GM12878 (cell line): ENCODE measurements at regions of chr2 and their contacts with region 1.

Region 1: GRCh38 chr2:20015472-20016083 is 3.1 kb upstream of the MATN3 start:
- DNase-seq: peak; percentile 7
- ATAC-seq: peak; percentile 79
- H3K4me3 ChIP-seq: no peak overlapping the region
- H3K27ac ChIP-seq: no peak overlapping the region
- H3K4me1 ChIP-seq: no peaks in the 10 kb centered on the region
- H3K27me3 ChIP-seq: peaks cover 5 to 16% of the 10 kb centered on the region in 2 experiments
- CTCF ChIP-seq: peak; percentile 49 to 52 (median 51); a peak in 5 of 6 replicates
- EP300 ChIP-seq: no peak
- POLR2A ChIP-seq: no peak
- RAD21 ChIP-seq: peak; percentile 64

Region 2: GRCh38 chr2:19955544-19956422 is 59.8 kb before region 1 on chr2:
- CTCF ChIA-PET with region 1: interaction called, 22 read pairs
- POLR2A ChIA-PET with region 1: interaction called, 3 read pairs
- RAD21 ChIA-PET with region 1: interaction called, 22 read pairs
- SMC1A ChIA-PET with region 1: interaction called, 24 read pairs
- in situ Hi-C with region 1: no loop called
- intact Hi-C with region 1: loop called (anchors 1 kb)
- DNase-seq: peak; percentile 24
- ATAC-seq: peak; percentile 100
- H3K4me3 ChIP-seq: no peak overlapping the region
- H3K27ac ChIP-seq: no peak overlapping the region
- H3K4me1 ChIP-seq: no peaks in the 10 kb centered on the region
- H3K27me3 ChIP-seq: no peaks in the 10 kb centered on the region
- CTCF ChIP-seq: peak; percentile 79 to 98 (median 82)
- EP300 ChIP-seq: no peak
- POLR2A ChIP-seq: no peak
- RAD21 ChIP-seq: peak; percentile 91

Region 3: DNA sequence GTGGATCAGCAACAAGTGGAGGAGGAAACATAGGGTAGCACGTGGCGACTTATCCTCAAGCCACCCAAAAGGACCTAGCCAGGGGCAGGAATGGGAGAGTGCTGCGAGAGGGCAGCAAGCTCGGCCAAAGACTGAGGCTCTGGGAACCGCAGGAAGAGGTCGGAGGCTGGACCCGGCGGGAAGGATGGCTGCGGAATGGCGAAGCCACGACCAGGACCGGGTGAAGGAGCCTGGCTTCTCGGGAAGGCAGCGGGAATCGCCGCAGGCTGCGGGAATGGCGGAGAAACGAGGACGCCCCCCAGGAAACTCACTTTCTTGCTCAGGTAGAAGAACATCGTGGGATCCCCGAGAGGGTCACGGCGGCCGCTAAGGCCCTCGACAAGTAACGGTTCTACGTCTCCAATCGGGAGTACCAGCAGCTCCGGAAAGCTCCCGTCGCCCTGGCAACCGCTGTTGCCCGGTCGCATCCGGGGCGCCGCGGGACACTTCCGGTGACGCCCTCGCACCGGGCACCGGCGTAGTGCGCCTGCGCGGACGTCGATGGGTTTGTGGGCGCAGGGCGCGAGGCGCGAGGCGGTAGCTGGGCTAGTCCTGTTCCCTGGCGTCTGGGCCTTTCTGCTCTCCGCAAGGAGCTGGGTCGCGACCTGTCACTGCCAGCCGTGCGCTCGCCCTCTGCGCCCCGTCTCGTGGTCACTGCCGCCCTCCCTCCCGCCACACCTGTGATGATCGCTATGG is 25.7 kb before region 1 on chr2 and contains the start of gene WDR35:
- CTCF ChIA-PET with region 1: interaction called, 12 read pairs
- POLR2A ChIA-PET with region 1: interaction called, 7 read pairs
- RAD21 ChIA-PET with region 1: no interaction called
- SMC1A ChIA-PET with region 1: interaction called, 6 read pairs
- in situ Hi-C with region 1: no loop called
- intact Hi-C with region 1: no loop called
- DNase-seq: peak; percentile 53
- ATAC-seq: peak; percentile 94
- H3K4me3 ChIP-seq: peak within 1 kb of the TSS; percentile 95
- H3K27ac ChIP-seq: peak within 1 kb of the TSS; percentile 28; the same call in 1 of the 2 replicates
- H3K4me1 ChIP-seq: peaks cover 6% of the 10 kb centered on the region; the same call in 1 of the 2 replicates
- H3K27me3 ChIP-seq: no peaks in the 10 kb centered on the region
- CTCF ChIP-seq: no peak
- EP300 ChIP-seq: no peak; a peak in 1 of 4 replicates
- POLR2A ChIP-seq: peak; percentile 80
- RAD21 ChIP-seq: no peak
- polyA plus RNA-seq, gene WDR35: 3.0 to 3.2 TPM

Region 4: GRCh38 chr2:20027705-20028434 is 12.3 kb after region 1 on chr2:
- CTCF ChIA-PET with region 1: interaction called, 12 read pairs
- POLR2A ChIA-PET with region 1: no interaction called
- RAD21 ChIA-PET with region 1: interaction called, 4 read pairs
- SMC1A ChIA-PET with region 1: interaction called, 7 read pairs
- in situ Hi-C with region 1: no loop called
- intact Hi-C with region 1: no loop called
- DNase-seq: no peak
- ATAC-seq: no peak
- H3K4me3 ChIP-seq: no peak overlapping the region
- H3K27ac ChIP-seq: no peak overlapping the region
- H3K4me1 ChIP-seq: no peaks in the 10 kb centered on the region
- H3K27me3 ChIP-seq: no peaks in the 10 kb centered on the region
- CTCF ChIP-seq: no peak
- EP300 ChIP-seq: no peak
- POLR2A ChIP-seq: no peak
- RAD21 ChIP-seq: no peak

Region 5: GRCh38 chr2:20051532-20052228 is 36.1 kb after region 1 on chr2 and contains the start of gene LAPTM4A:
- CTCF ChIA-PET with region 1: interaction called, 24 read pairs
- POLR2A ChIA-PET with region 1: no interaction called
- RAD21 ChIA-PET with region 1: interaction called, 18 read pairs
- SMC1A ChIA-PET with region 1: interaction called, 14 read pairs
- in situ Hi-C with region 1: no loop called
- intact Hi-C with region 1: no loop called
- DNase-seq: peak; percentile 99
- ATAC-seq: peak; percentile 93
- H3K4me3 ChIP-seq: peak within 1 kb of the TSS; percentile 80
- H3K27ac ChIP-seq: peak within 1 kb of the TSS; percentile 99
- H3K4me1 ChIP-seq: 0 out of 2 replicates have a peak, but pooled peaks cover 11% of the 10 kb centered on the region
- H3K27me3 ChIP-seq: no peaks in the 10 kb centered on the region
- CTCF ChIP-seq: no peak
- EP300 ChIP-seq: 0 out of 4 replicates have a peak, but pooled peaks of 1 of the 2 experiments have one; percentile 38
- POLR2A ChIP-seq: peak; percentile 83
- RAD21 ChIP-seq: no peak
- polyA plus RNA-seq, gene LAPTM4A: 77.2 to 87.8 TPM

Region 6: GRCh38 chr2:20089715-20090591 is 74.4 kb after region 1 on chr2:
- CTCF ChIA-PET with region 1: interaction called, 57 read pairs
- POLR2A ChIA-PET with region 1: no interaction called
- RAD21 ChIA-PET with region 1: interaction called, 20 read pairs
- SMC1A ChIA-PET with region 1: interaction called, 31 read pairs
- in situ Hi-C with region 1: loop called (anchors 10 kb)
- intact Hi-C with region 1: no loop called
- DNase-seq: no peak
- ATAC-seq: no peak
- H3K4me3 ChIP-seq: no peak overlapping the region
- H3K27ac ChIP-seq: no peak overlapping the region
- H3K4me1 ChIP-seq: no peaks in the 10 kb centered on the region
- H3K27me3 ChIP-seq: no peaks in the 10 kb centered on the region; a peak in 1 of 4 replicates
- CTCF ChIP-seq: no peak
- EP300 ChIP-seq: no peak
- POLR2A ChIP-seq: no peak
- RAD21 ChIP-seq: no peak

Region 7: DNA sequence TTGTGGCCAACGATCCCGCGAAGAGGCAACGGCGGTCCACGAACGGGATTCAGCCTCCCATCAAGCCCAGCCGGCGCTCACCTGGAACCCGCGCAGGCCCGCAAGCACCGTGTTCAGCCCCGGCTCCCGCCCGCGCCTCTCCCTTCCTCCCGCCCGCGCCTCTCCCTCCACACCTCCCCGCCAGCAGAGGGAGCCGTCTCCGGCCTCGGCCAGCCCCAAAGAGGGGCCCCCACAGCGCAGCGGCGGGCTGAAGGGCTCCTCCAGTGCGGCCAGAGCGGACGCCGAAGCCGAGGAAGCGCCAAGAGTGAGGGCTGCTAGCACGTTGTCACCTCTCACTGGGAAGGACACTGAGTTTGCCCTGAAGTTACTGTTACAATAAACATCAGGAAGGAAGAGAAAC is 91.2 kb after region 1 on chr2:
- CTCF ChIA-PET with region 1: interaction called, 44 read pairs
- POLR2A ChIA-PET with region 1: no interaction called
- RAD21 ChIA-PET with region 1: interaction called, 8 read pairs
- SMC1A ChIA-PET with region 1: interaction called, 9 read pairs
- in situ Hi-C with region 1: no loop called
- intact Hi-C with region 1: no loop called
- DNase-seq: no peak
- ATAC-seq: no peak
- H3K4me3 ChIP-seq: no peak overlapping the region
- H3K27ac ChIP-seq: no peak overlapping the region
- H3K4me1 ChIP-seq: no peaks in the 10 kb centered on the region
- H3K27me3 ChIP-seq: no peaks in the 10 kb centered on the region
- CTCF ChIP-seq: no peak
- EP300 ChIP-seq: no peak
- POLR2A ChIP-seq: no peak
- RAD21 ChIP-seq: no peak